ENCODE measurements at regions of chr2 and their contacts with region 1.

Region 1: GRCh38 chr2:190947711-190948251 is 66.2 kb downstream of the STAT1 start:
- DNase-seq: no peak
- ATAC-seq: peak; percentile 78
- H3K4me3 Mint-ChIP-seq: no peak overlapping the region
- H3K27ac Mint-ChIP-seq: peak overlapping the region; percentile 47
- H3K4me1 Mint-ChIP-seq: peaks cover 18% of the 10 kb centered on the region
- H3K27me3 Mint-ChIP-seq: no peaks in the 10 kb centered on the region
- CTCF ChIP-seq: no peak

Region 2: DNA sequence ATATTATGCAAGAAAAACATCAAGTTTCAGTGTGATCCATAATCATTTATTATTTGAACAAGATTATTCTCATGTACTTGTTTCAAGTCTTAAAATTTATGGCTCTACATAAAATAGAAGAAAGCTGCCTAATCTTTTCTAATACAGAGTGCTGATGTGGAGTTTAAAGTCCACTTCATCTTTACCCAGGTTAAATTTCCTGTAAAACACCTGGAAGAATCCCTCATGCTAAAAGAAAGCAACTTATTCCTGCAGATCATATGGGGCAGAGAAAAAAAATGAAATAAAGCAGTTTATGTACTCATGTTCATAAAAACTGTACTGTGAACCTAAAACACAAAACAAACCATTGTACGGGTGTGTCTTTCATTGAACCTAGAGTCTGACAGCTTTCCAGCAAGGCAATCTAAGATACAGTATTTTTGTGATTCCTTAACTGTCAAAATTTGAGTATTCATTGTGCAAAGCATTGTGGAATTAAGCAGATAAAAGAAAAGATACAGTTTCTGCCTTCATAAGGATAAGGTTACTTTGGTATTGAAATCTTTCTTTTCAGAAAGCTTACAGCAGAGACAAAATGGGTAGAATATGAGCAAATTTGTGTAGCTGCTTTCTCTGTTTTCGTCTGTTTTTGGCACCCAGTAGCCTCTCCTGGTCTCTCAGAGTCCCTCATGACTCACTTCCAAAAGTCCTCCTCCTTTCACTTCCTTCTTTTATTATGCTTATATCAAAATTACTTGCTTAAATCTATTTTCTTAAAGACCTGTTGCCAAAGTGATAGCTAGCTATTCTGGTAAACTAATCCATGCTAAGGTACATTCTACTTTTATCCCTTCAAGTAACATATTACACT is 94.0 kb before region 1 on chr2:
- CTCF ChIA-PET with region 1: interaction called, 25 read pairs
- POLR2A ChIA-PET with region 1: no interaction called
- intact Hi-C with region 1: loop called (anchors 1 kb)
- DNase-seq: no peak
- ATAC-seq: peak; percentile 60
- H3K4me3 Mint-ChIP-seq: no peak overlapping the region
- H3K27ac Mint-ChIP-seq: peak overlapping the region; percentile 9
- H3K4me1 Mint-ChIP-seq: peaks cover 19% of the 10 kb centered on the region
- H3K27me3 Mint-ChIP-seq: no peaks in the 10 kb centered on the region
- CTCF ChIP-seq: no peak

Measured in activated B cell treated with CpG ODN at 0.5 μM for 24 hours (primary cell).